ENCODE measurements at regions of chr6 and their contacts with region 1.

Region 1: GRCh38 chr6:14885498-14885897 is 360.4 kb upstream of the JARID2 start:
- DNase-seq: no peak
- H3K4me3 Mint-ChIP-seq: no peak overlapping the region
- H3K27ac Mint-ChIP-seq: no peak overlapping the region
- H3K4me1 Mint-ChIP-seq: no peaks in the 10 kb centered on the region
- H3K27me3 Mint-ChIP-seq: no peaks in the 10 kb centered on the region

Region 2: DNA sequence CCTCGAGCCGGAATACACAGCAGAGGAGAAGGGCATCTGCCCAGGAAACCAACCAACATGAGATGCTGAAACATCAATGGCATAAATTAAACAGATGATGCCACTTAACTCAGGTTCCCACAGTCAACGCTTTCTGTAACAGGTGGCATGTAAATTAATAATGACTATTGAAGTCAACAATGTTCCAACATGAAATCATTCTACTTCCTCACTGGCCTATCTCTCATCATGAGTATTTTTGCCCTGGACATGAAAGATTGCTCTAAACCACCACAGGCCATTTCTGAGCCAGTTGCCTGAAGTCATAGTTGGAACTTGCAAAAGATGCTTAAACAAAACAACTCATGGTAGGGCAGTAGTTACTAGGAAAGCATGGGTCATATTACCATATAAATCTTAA is 37.5 kb before region 1 on chr6:
- CTCF ChIA-PET with region 1: no interaction called
- POLR2A ChIA-PET with region 1: no interaction called
- DNase-seq: no peak
- H3K4me3 Mint-ChIP-seq: no peak overlapping the region
- H3K27ac Mint-ChIP-seq: no peak overlapping the region
- H3K4me1 Mint-ChIP-seq: no peaks in the 10 kb centered on the region
- H3K27me3 Mint-ChIP-seq: no peaks in the 10 kb centered on the region

Region 3: GRCh38 chr6:14865531-14866100 is 19.9 kb before region 1 on chr6:
- CTCF ChIA-PET with region 1: no interaction called
- POLR2A ChIA-PET with region 1: no interaction called
- DNase-seq: no peak
- H3K4me3 Mint-ChIP-seq: no peak overlapping the region
- H3K27ac Mint-ChIP-seq: no peak overlapping the region
- H3K4me1 Mint-ChIP-seq: peaks cover 15% of the 10 kb centered on the region
- H3K27me3 Mint-ChIP-seq: no peaks in the 10 kb centered on the region

Region 4: DNA sequence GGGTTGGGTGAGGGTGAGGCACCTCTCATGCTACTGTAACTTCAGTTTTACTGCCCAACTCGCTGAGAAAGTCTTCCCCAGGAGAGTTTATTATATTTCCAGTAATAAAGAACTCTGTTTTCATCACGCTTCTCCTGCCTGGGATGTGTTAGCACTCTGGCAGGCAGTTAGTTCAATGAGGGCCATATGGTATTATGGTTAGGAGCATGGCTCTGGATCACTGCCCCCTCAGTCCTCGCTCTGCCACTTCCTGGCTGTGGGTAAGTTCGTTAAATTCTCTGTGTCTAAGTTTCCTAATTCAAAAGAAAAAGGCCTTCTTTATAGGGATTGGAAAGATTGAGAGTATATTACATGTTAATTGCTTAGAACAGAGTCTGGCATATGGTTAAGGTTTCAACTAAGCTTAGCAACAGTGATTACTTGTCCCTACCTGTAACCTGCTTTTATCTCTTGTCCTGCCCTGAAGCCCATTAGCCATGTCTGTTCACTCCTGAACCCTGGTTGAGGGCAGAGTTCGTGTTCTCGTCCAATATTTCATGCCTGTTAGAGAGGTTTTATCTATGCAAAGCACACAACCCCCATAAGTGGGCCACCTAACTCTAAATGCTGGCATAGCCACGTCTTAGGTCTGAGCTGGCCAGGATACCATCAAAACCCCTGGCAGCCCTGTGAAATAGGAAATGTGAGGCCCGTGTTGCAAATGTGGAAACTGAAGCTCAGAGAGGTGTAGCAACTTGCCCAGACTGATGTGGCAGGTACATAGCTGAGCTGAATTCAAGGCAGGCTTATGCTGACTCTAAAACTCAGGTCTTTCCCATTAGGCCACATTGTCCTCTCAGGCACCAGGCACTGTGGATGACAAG is 17.9 kb after region 1 on chr6:
- CTCF ChIA-PET with region 1: interaction called, 10 read pairs
- POLR2A ChIA-PET with region 1: no interaction called
- DNase-seq: no peak
- H3K4me3 Mint-ChIP-seq: no peak overlapping the region
- H3K27ac Mint-ChIP-seq: no peak overlapping the region
- H3K4me1 Mint-ChIP-seq: no peaks in the 10 kb centered on the region
- H3K27me3 Mint-ChIP-seq: no peaks in the 10 kb centered on the region